GM12878 (cell line): ENCODE measurements at regions of chr19 and their contacts with region 1.

Region 1: GRCh38 chr19:51660975-51661600 is 14.5 kb upstream of the SIGLEC14 start:
- DNase-seq: no peak
- ATAC-seq: peak; percentile 78
- H3K4me3 ChIP-seq: no peak overlapping the region
- H3K27ac ChIP-seq: no peak overlapping the region
- H3K4me1 ChIP-seq: no peaks in the 10 kb centered on the region
- H3K27me3 ChIP-seq: no peaks in the 10 kb centered on the region
- CTCF ChIP-seq: peak; percentile 58 to 63 (median 63)
- EP300 ChIP-seq: no peak
- POLR2A ChIP-seq: no peak
- RAD21 ChIP-seq: peak; percentile 88

Region 2: GRCh38 chr19:51422053-51422448 is 239.0 kb before region 1 on chr19:
- CTCF ChIA-PET with region 1: interaction called, 12 read pairs
- POLR2A ChIA-PET with region 1: no interaction called
- RAD21 ChIA-PET with region 1: interaction called, 13 read pairs
- SMC1A ChIA-PET with region 1: interaction called, 11 read pairs
- in situ Hi-C with region 1: no loop called
- intact Hi-C with region 1: loop called (anchors 1 kb)
- DNase-seq: no peak
- ATAC-seq: peak; percentile 64
- H3K4me3 ChIP-seq: no peak overlapping the region
- H3K27ac ChIP-seq: no peak overlapping the region
- H3K4me1 ChIP-seq: peaks cover 6% of the 10 kb centered on the region
- H3K27me3 ChIP-seq: no peaks in the 10 kb centered on the region; a peak in 1 of 4 replicates
- CTCF ChIP-seq: peak; percentile 99 to 100 (median 99)
- EP300 ChIP-seq: no peak
- POLR2A ChIP-seq: no peak
- RAD21 ChIP-seq: peak; percentile 89

Region 3: DNA sequence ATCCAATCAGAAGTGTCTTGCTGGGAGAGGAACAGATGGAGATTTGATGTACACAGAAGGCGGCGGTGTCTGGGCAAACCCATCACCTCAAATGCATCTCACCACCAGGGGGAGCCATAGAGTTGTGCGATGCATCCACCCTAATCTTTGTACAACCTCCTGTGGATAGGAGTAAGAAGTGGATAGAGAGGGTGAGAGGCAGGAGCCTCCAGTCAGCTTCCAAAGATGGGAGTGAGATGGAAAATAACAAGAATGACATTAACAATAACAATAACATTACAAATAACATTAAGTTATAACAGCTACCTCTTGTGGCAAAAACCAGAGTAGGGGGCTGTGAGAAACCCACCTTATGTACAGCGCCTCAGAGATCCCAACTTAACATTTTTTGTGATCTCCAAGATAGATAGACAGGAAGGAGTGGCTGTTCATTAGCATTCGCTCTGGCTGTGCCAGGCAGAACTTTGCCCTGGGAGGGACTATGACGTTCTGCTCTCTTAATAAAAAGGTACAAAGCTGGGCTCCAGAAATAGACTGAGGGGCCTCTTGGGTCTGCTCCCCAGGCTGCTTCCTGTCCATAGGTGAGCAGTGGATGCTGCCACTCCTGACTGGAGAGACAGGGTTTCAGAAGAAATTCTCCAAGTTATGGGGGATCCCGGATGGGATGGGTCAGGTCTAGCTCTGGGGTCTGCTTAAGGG is 187.9 kb before region 1 on chr19:
- CTCF ChIA-PET with region 1: interaction called, 281 read pairs
- POLR2A ChIA-PET with region 1: no interaction called
- RAD21 ChIA-PET with region 1: interaction called, 133 read pairs
- SMC1A ChIA-PET with region 1: interaction called, 110 read pairs
- in situ Hi-C with region 1: loop called (anchors 5 kb)
- intact Hi-C with region 1: loop called (anchors 1 kb)
- DNase-seq: peak; percentile 15
- ATAC-seq: peak; percentile 91
- H3K4me3 ChIP-seq: no peak overlapping the region
- H3K27ac ChIP-seq: no peak overlapping the region
- H3K4me1 ChIP-seq: no peaks in the 10 kb centered on the region
- H3K27me3 ChIP-seq: no peaks in the 10 kb centered on the region; a peak in 1 of 4 replicates
- CTCF ChIP-seq: peak; percentile 65 to 93 (median 86)
- EP300 ChIP-seq: no peak
- POLR2A ChIP-seq: no peak
- RAD21 ChIP-seq: peak; percentile 92

Region 4: GRCh38 chr19:51514866-51515481 is 146.1 kb before region 1 on chr19:
- CTCF ChIA-PET with region 1: interaction called, 111 read pairs
- POLR2A ChIA-PET with region 1: no interaction called
- RAD21 ChIA-PET with region 1: interaction called, 16 read pairs
- SMC1A ChIA-PET with region 1: interaction called, 43 read pairs
- in situ Hi-C with region 1: no loop called
- intact Hi-C with region 1: loop called (anchors 5 kb)
- DNase-seq: peak; percentile 31
- ATAC-seq: peak; percentile 76
- H3K4me3 ChIP-seq: no peak overlapping the region
- H3K27ac ChIP-seq: no peak overlapping the region
- H3K4me1 ChIP-seq: no peaks in the 10 kb centered on the region
- H3K27me3 ChIP-seq: peaks cover 0 to 7% of the 10 kb centered on the region in 2 experiments; a peak in 1 of 4 replicates
- CTCF ChIP-seq: peak; percentile 72 to 84 (median 75)
- EP300 ChIP-seq: no peak
- POLR2A ChIP-seq: no peak
- RAD21 ChIP-seq: peak; percentile 58

Region 5: DNA sequence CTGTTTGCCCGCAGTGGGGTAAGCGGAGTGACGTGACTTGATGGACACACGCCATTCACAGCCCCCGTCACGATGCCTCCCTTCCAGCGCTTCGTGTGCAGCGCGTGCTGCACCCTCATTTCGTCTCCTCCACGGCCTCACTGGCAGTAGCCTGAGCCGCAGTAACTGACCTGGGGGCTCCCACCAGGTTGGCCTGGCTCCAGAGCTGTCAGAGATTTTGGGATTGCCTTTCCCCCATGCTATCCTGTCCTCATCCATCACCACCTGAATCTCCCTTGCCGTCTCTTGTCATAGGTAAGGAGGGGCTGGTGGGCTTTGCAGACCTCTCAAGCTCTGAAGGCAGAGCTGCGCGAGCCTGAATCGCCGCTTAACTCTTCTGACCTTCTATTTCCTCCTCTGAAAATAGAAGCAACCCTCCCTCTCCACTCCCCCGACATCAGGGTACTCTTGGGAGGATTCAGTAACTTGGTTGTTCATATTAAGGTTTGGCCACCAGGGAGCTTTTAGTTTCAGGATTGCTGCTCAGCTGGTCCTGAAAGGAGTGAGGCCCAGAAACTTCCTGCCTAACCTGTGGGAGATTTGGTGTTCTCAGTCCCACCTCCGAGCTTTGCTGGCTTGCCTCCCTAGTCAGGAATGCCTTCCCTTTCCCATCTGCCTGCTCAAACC is 58.8 kb before region 1 on chr19:
- CTCF ChIA-PET with region 1: interaction called, 24 read pairs
- POLR2A ChIA-PET with region 1: interaction called, 3 read pairs
- RAD21 ChIA-PET with region 1: interaction called, 12 read pairs
- SMC1A ChIA-PET with region 1: interaction called, 13 read pairs
- in situ Hi-C with region 1: no loop called
- intact Hi-C with region 1: loop called (anchors 2 kb)
- DNase-seq: no peak
- ATAC-seq: peak; percentile 9; the same call in 2 of the 3 replicates
- H3K4me3 ChIP-seq: peak overlapping the region; percentile 57; the same call in 1 of the 2 replicates
- H3K27ac ChIP-seq: peak overlapping the region; percentile 67
- H3K4me1 ChIP-seq: peaks cover 33% of the 10 kb centered on the region
- H3K27me3 ChIP-seq: 0 out of 4 replicates have a peak, but pooled peaks cover 0 to 1% of the 10 kb centered on the region in 2 experiments
- CTCF ChIP-seq: peak in 2 of 3 experiments; percentile 17 to 20; a peak in 2 of 6 replicates
- EP300 ChIP-seq: no peak
- POLR2A ChIP-seq: no peak
- RAD21 ChIP-seq: peak; percentile 46

Region 6: DNA sequence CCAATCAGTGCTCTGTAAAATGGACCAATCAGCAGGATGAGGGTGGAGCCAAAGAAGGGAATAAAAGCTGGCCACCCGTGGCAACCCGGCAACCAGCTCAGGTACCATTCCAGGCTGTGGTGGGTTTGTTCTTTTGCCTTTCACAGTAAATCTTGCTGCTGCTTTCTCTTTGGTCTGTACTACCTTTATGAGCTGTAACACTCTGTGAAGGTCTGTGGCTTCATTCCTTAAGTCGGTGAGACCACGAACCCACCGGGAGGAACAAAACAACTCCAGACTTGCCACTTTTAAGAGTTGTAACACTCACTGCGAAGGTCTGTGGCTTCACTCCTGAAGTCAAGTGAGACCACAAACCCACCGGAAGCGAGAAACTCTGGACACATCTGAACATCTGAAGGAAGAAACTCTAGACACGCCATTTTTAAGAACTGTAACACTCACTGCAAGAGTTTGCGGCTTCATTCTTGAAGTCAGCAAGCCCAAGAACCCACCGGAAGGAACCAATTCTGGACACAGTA is 15.5 kb after region 1 on chr19:
- CTCF ChIA-PET with region 1: interaction called, 22 read pairs
- POLR2A ChIA-PET with region 1: interaction called, 3 read pairs
- RAD21 ChIA-PET with region 1: no interaction called
- SMC1A ChIA-PET with region 1: interaction called, 5 read pairs
- in situ Hi-C with region 1: no loop called
- intact Hi-C with region 1: no loop called
- DNase-seq: no peak
- ATAC-seq: no peak
- H3K4me3 ChIP-seq: no peak overlapping the region
- H3K27ac ChIP-seq: no peak overlapping the region
- H3K4me1 ChIP-seq: no peaks in the 10 kb centered on the region
- H3K27me3 ChIP-seq: no peaks in the 10 kb centered on the region
- CTCF ChIP-seq: no peak
- EP300 ChIP-seq: no peak
- POLR2A ChIP-seq: no peak
- RAD21 ChIP-seq: no peak

Region 7: DNA sequence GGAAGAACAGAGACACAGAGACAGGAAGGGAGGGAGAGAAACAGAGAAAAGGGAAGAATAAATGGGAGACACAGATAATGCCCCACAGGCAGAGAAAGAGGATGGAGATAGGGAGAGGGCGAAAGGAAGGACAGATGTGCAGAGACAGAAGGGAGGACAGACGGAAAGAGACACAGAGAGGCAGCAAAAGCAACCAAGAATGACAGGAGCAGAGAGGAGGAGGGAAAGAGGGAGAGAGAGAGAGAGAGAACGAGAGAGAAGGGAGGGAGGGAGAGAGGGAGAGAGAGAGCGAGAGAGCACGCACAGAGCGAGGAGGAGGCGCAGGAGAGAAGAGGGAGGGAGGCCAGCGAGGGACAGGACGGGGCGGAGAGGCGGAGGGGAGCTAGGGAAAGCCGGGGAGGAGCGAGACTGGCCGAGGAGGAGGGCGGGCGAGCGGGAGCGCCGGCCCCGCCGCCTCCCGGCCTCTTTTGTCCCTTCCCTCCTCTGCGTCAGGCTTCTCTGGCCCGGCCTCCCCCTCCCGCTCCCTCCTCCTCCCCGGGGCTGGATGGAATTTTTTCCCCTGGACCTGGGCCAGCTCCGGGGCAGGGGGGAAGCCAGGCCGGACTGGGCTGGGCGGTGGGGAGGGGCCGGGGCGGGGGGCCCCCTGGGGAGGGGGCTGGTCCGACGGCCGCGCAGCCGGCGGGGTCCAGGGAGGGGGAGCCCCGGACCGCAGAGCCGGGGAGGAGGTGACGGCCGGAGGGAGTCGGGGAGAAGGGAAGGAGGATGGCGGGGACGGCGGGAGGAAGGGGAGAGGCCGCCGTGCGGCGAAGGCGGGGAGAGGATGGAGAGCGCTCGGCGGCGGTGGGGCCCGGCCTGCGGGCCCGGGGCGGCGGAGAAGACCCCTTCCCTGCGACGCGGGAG is 27.8 kb after region 1 on chr19:
- CTCF ChIA-PET with region 1: no interaction called
- POLR2A ChIA-PET with region 1: no interaction called
- RAD21 ChIA-PET with region 1: no interaction called
- SMC1A ChIA-PET with region 1: no interaction called
- in situ Hi-C with region 1: no loop called
- intact Hi-C with region 1: no loop called
- DNase-seq: no peak
- ATAC-seq: no peak
- H3K4me3 ChIP-seq: no peak overlapping the region
- H3K27ac ChIP-seq: no peak overlapping the region
- H3K4me1 ChIP-seq: no peaks in the 10 kb centered on the region
- H3K27me3 ChIP-seq: peaks cover 3 to 9% of the 10 kb centered on the region in 2 experiments
- CTCF ChIP-seq: no peak
- EP300 ChIP-seq: no peak
- POLR2A ChIP-seq: no peak
- RAD21 ChIP-seq: no peak

Region 8: GRCh38 chr19:51751655-51752054 is 90.6 kb after region 1 on chr19 and contains the start of gene FPR1:
- CTCF ChIA-PET with region 1: no interaction called
- POLR2A ChIA-PET with region 1: no interaction called
- RAD21 ChIA-PET with region 1: no interaction called
- SMC1A ChIA-PET with region 1: no interaction called
- in situ Hi-C with region 1: no loop called
- intact Hi-C with region 1: no loop called
- DNase-seq: no peak
- ATAC-seq: no peak
- H3K4me3 ChIP-seq: no peak within 1 kb of the TSS
- H3K27ac ChIP-seq: no peak within 1 kb of the TSS
- H3K4me1 ChIP-seq: no peaks in the 10 kb centered on the region
- H3K27me3 ChIP-seq: no peaks in the 10 kb centered on the region
- CTCF ChIP-seq: no peak
- EP300 ChIP-seq: no peak
- POLR2A ChIP-seq: no peak
- RAD21 ChIP-seq: no peak
- polyA plus RNA-seq, gene FPR1: not detected

Region 9: DNA sequence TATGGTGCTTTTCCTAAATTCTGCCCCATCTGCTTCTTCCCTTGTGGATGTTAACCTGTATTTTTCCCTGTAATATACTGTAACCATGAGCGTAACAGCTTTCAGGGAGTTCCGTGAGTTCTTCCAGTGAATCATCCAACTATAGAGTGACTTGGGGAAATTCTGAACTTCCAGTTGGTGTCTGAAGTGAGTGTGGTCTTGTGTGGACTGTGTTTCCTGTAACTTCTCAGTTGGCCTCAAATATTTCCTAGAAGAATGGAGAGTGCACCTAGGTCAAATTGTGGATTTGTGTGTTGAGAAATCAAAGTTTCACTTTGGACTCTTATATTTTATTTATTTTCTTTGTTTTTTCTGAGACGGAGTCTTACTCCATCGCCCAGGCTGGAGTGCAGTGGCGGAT is 597.3 kb after region 1 on chr19:
- CTCF ChIA-PET with region 1: no interaction called
- POLR2A ChIA-PET with region 1: no interaction called
- RAD21 ChIA-PET with region 1: no interaction called
- SMC1A ChIA-PET with region 1: no interaction called
- in situ Hi-C with region 1: no loop called
- intact Hi-C with region 1: no loop called
- DNase-seq: no peak
- ATAC-seq: no peak
- H3K4me3 ChIP-seq: no peak overlapping the region
- H3K27ac ChIP-seq: no peak overlapping the region
- H3K4me1 ChIP-seq: no peaks in the 10 kb centered on the region
- H3K27me3 ChIP-seq: no peaks in the 10 kb centered on the region
- CTCF ChIP-seq: no peak
- EP300 ChIP-seq: no peak
- POLR2A ChIP-seq: no peak
- RAD21 ChIP-seq: no peak